ENCODE measurements at regions of chr4 and their contacts with region 1.

Region 1: GRCh38 chr4:7987148-7987989 is 47.7 kb upstream of the AFAP1 start:
- DNase-seq: peak; percentile 90
- H3K4me3 Mint-ChIP-seq: no peak overlapping the region
- H3K27ac Mint-ChIP-seq: no peak overlapping the region
- H3K4me1 Mint-ChIP-seq: peaks cover 7% of the 10 kb centered on the region
- H3K27me3 Mint-ChIP-seq: peaks cover 5% of the 10 kb centered on the region

Region 2: DNA sequence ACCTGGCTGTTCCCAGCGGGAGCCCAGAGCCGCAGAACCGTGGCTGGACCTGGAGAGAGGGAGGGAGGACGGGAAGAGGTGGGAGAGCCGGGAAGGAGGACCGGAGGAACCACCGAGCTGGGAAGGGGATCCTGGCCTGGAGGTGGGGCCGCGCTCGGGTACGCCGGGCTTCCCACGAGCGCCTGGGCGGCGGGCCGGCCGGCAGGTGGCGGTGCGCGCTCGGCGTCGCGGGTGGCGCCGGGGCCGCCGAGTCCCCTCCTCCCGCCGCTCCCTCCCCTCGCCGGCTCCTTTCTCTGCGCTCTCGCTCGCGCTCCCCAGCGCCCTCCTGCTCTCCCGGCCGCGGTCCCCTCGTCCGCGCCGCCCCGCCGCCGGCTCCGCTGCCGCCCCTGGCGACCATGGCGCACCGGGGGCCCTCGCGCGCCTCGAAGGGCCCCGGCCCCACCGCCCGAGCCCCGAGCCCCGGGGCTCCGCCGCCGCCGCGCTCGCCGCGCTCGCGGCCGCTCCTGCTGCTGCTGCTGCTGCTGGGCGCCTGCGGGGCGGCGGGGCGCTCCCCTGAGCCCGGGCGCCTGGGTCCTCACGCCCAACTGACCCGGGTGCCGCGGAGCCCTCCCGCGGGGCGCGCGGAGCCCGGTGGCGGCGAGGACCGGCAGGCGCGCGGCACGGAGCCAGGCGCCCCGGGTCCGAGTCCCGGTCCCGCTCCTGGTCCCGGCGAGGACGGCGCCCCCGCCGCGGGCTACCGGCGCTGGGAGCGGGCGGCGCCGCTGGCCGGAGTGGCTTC is 794.9 kb before region 1 on chr4 and contains the start of gene SORCS2:
- CTCF ChIA-PET with region 1: no interaction called
- intact Hi-C with region 1: loop called (anchors 2 kb)
- DNase-seq: peak; percentile 40
- H3K4me3 Mint-ChIP-seq: peak within 1 kb of the TSS; percentile 4
- H3K27ac Mint-ChIP-seq: no peak within 1 kb of the TSS
- H3K4me1 Mint-ChIP-seq: peaks cover 1% of the 10 kb centered on the region
- H3K27me3 Mint-ChIP-seq: peaks cover 42% of the 10 kb centered on the region
- total RNA-seq, gene SORCS2: 0.07 to 0.15 TPM

Region 3: DNA sequence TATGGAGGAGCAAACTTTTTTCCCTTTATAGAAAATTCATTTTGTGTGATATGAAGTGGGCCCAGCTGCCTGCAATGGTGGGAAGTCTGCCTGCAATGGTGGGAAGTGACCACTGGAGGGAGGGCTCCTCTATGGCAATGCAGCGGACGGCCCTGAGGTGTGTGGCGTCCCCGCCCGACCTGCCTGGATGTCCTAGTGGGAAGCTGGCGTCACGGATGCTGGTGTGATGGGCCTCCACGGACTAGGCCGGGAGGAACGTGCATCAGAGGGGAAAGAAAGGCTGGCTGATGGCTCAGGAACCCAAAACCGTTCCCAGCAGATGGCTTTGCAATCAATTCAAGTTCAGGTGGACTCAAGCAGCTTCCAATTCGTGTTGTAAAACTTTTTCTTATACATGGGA is 225.6 kb before region 1 on chr4:
- CTCF ChIA-PET with region 1: interaction called, 6 read pairs
- intact Hi-C with region 1: loop called (anchors 2 kb)
- DNase-seq: peak; percentile 69
- H3K4me3 Mint-ChIP-seq: no peak overlapping the region
- H3K27ac Mint-ChIP-seq: peak overlapping the region; percentile 76
- H3K4me1 Mint-ChIP-seq: peaks cover 39% of the 10 kb centered on the region
- H3K27me3 Mint-ChIP-seq: no peaks in the 10 kb centered on the region

Region 4: DNA sequence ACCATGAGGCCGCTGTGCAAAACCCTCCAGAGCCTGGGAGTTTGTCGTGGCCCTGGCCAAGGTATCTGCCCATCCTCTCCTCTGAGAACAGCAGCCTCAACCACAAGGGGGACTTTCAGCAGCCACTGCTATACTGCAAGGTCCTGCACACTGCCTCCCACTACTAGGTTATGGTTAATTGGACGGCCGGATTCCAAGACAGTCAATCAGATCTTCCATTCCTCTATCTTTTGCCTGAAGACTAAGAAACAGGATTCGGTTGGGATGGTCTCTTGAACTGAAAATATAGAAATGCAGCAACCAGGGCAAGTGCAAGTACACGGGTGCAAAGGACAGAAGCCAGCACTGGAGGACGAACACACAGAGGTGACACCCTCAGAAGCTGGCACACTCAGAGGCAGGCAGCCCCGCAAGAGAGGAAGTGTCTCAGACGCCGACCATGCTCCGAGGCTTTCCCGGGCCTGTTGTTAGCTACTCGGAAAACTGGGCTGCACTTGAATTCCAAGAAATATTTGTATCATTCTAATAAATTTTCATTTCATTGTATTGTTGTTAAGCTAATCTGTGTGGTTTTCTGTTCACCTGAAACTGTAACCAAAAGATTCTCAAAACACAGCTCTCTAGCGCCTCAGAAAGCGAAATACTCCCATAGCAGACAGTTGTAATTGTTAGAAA is 111.0 kb before region 1 on chr4:
- CTCF ChIA-PET with region 1: interaction called, 3 read pairs
- intact Hi-C with region 1: loop called (anchors 1 kb)
- DNase-seq: peak; percentile 45
- H3K4me3 Mint-ChIP-seq: peak overlapping the region; percentile 54
- H3K27ac Mint-ChIP-seq: peak overlapping the region; percentile 74
- H3K4me1 Mint-ChIP-seq: peaks cover 49% of the 10 kb centered on the region
- H3K27me3 Mint-ChIP-seq: no peaks in the 10 kb centered on the region

Region 5: DNA sequence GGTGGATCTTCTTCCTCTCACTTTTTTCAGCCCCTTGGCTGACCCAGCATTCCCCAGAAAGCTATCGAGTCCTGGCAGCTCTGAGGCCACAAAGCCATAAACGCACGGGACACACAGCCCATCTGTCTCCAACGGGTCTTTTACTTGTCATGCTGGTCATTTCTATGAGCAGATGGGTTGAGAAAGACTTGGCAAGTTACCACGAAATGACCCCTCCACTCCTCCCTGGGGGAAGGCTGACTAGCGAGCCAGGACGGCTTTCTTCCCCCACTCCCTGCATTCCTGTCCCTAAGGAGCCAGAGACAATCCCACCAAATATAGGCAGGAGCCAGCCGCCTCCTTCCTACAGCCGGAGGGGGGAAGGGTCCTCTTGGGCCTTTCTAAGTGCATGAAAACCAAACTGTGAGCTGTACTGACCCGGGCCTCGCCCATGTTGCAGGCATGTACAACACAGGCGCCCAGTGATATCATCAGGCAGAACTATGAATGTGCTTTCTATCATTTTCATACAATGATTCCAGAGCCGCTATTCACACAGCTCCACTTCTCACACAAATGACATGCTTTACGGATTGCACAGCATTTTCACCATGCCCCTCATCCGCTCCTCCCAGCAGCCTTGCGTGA is 76.3 kb before region 1 on chr4:
- CTCF ChIA-PET with region 1: no interaction called
- intact Hi-C with region 1: no loop called
- DNase-seq: no peak
- H3K4me3 Mint-ChIP-seq: no peak overlapping the region
- H3K27ac Mint-ChIP-seq: no peak overlapping the region
- H3K4me1 Mint-ChIP-seq: peaks cover 42% of the 10 kb centered on the region
- H3K27me3 Mint-ChIP-seq: no peaks in the 10 kb centered on the region

Region 6: GRCh38 chr4:7960790-7961655 is 26.3 kb before region 1 on chr4:
- CTCF ChIA-PET with region 1: interaction called, 5 read pairs
- intact Hi-C with region 1: loop called (anchors 1 kb)
- DNase-seq: peak; percentile 87
- H3K4me3 Mint-ChIP-seq: peak overlapping the region; percentile 2
- H3K27ac Mint-ChIP-seq: peak overlapping the region; percentile 68
- H3K4me1 Mint-ChIP-seq: peaks cover 48% of the 10 kb centered on the region
- H3K27me3 Mint-ChIP-seq: no peaks in the 10 kb centered on the region

Region 7: GRCh38 chr4:8724823-8725530 is 737.6 kb after region 1 on chr4:
- CTCF ChIA-PET with region 1: no interaction called
- intact Hi-C with region 1: no loop called
- DNase-seq: no peak
- H3K4me3 Mint-ChIP-seq: no peak overlapping the region
- H3K27ac Mint-ChIP-seq: no peak overlapping the region
- H3K4me1 Mint-ChIP-seq: no peaks in the 10 kb centered on the region
- H3K27me3 Mint-ChIP-seq: no peaks in the 10 kb centered on the region